OCI-LY7 (cell line): ENCODE measurements at regions of chr6 and their contacts with region 1.

Region 1: GRCh38 chr6:26183581-26184366 is 96.5 kb downstream of the HFE start:
- DNase-seq: no peak
- H3K4me3 ChIP-seq: no peak overlapping the region
- H3K27ac ChIP-seq: no peak overlapping the region
- H3K4me1 ChIP-seq: peaks cover 22% of the 10 kb centered on the region
- CTCF ChIP-seq: no peak

Region 2: GRCh38 chr6:24858169-24858801 is 1325.5 kb before region 1 on chr6:
- CTCF ChIA-PET with region 1: no interaction called
- POLR2A ChIA-PET with region 1: no interaction called
- intact Hi-C with region 1: no loop called
- DNase-seq: peak; percentile 70
- H3K4me3 ChIP-seq: peak overlapping the region; percentile 1
- H3K27ac ChIP-seq: peak overlapping the region; percentile 82
- H3K4me1 ChIP-seq: peaks cover 81% of the 10 kb centered on the region
- CTCF ChIP-seq: peak; percentile 28; the same call in 1 of the 2 replicates

Region 3: GRCh38 chr6:26163427-26164119 is 20.2 kb before region 1 on chr6:
- CTCF ChIA-PET with region 1: no interaction called
- POLR2A ChIA-PET with region 1: interaction called, 31 read pairs
- intact Hi-C with region 1: no loop called
- DNase-seq: no peak
- H3K4me3 ChIP-seq: no peak overlapping the region
- H3K27ac ChIP-seq: peak overlapping the region; percentile 63
- H3K4me1 ChIP-seq: peaks cover 57% of the 10 kb centered on the region
- CTCF ChIP-seq: no peak

Region 4: GRCh38 chr6:26234421-26235296 is 50.9 kb after region 1 on chr6:
- CTCF ChIA-PET with region 1: no interaction called
- POLR2A ChIA-PET with region 1: no interaction called
- intact Hi-C with region 1: no loop called
- DNase-seq: peak; percentile 90
- H3K4me3 ChIP-seq: peak overlapping the region; percentile 69
- H3K27ac ChIP-seq: peak overlapping the region; percentile 92
- H3K4me1 ChIP-seq: peaks cover 26% of the 10 kb centered on the region
- CTCF ChIP-seq: no peak

Region 5: GRCh38 chr6:26421259-26422144 is 237.7 kb after region 1 on chr6:
- CTCF ChIA-PET with region 1: no interaction called
- POLR2A ChIA-PET with region 1: no interaction called
- intact Hi-C with region 1: no loop called
- DNase-seq: peak; percentile 84
- H3K4me3 ChIP-seq: peak overlapping the region; percentile 76
- H3K27ac ChIP-seq: peak overlapping the region; percentile 21
- H3K4me1 ChIP-seq: peaks cover 31% of the 10 kb centered on the region
- CTCF ChIP-seq: no peak